ENCODE measurements at regions of chr6 and their contacts with region 1.

Region 1: DNA sequence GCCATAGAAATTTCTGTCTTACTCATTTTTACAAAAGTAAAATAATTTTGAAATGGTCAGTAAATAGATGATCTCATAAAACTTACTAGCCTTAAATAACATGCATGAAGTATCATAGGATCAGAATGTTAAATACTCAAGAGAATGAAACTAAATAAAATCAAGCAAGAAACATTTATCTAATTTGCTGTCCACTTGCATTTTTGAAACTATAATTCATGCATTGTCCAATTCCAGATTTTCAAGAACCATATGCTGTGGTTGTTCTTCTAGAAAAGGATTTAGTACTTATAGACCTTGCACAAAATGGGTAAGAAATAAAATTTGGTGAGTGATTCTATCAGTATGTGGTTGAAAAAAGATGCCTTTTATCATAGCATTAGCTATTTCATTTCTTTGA is 107.0 kb downstream of the STXBP5 start:
- DNase-seq: no peak
- H3K4me3 ChIP-seq: no peak overlapping the region
- H3K27ac ChIP-seq: no peak overlapping the region
- H3K4me1 ChIP-seq: peaks cover 0 to 7% of the 10 kb centered on the region in 2 donors
- H3K27me3 ChIP-seq: no peaks in the 10 kb centered on the region
- CTCF ChIP-seq: no peak
- POLR2A ChIP-seq: no peak

Region 2: GRCh38 chr6:147268254-147268653 is 43.0 kb before region 1 on chr6:
- intact Hi-C with region 1: loop called in 1 of 2 experiments (anchors 10 kb)
- DNase-seq: no peak
- H3K4me3 ChIP-seq: no peak overlapping the region
- H3K27ac ChIP-seq: no peak overlapping the region
- H3K4me1 ChIP-seq: no peaks in the 10 kb centered on the region
- H3K27me3 ChIP-seq: no peaks in the 10 kb centered on the region
- CTCF ChIP-seq: no peak
- POLR2A ChIP-seq: no peak

Measured in adrenal gland (tissue), 19 donors.